Caco-2 (cell line): ENCODE measurements at regions of chr5 and their contacts with region 1.

Region 1: DNA sequence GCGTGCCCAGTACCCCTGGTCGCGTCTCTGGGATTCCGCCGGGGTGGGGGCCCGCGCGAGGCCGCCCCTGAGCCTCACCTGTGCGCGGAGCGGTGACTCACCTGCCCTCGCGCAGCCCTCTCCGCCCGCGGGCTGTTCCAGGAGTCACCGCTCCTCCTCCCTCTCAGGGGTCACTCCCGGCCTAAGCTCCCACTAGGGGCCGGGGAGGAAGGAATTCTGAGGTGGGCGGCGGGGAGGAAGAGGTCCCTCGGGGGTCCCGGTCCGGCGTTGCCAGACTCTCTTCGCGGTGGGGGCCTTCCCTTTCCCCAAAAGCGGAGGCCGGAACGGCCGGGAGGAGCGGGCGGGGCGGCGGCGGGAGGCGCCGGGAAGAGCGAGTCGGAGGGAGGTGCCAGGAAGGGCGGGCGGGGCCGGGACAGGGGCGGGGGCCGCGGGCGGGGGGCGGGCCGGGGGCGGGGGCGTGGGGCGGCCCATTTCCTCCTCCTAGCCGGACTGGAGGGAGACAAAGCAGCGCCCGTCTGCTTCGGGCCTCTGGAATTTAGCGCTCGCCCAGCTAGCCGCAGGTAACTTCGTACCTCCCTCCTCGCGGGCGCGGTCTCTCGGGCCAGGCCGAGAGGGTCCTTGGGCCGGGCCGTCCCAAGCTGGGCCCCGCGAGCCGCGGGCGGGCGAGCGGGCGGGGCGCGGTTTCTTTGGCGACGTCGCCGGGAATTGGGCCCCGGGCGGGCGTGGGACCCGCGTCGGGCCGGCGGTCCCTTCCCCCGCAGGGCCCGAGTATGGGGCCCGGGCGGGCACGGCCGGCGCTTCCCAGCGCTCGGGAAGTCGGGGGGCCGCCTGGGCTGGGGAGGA is at the start of gene CTNNA1:
- DNase-seq: peak; percentile 91 to 94
- H3K4me3 ChIP-seq: peak within 1 kb of the TSS; percentile 86
- H3K4me3 Mint-ChIP-seq: peak within 1 kb of the TSS; percentile 93
- H3K27ac Mint-ChIP-seq: peak within 1 kb of the TSS; percentile 97
- H3K4me1 ChIP-seq: peaks cover 18% of the 10 kb centered on the region
- H3K4me1 Mint-ChIP-seq: peaks cover 52% of the 10 kb centered on the region
- H3K27me3 ChIP-seq: no peaks in the 10 kb centered on the region
- H3K27me3 Mint-ChIP-seq: no peaks in the 10 kb centered on the region
- CTCF ChIP-seq: no peak
- total RNA-seq, gene CTNNA1: 392 and 403 TPM in 2 replicates

Region 2: GRCh38 chr5:138654281-138654867 is 98.8 kb before region 1 on chr5:
- CTCF ChIA-PET with region 1: no interaction called
- POLR2A ChIA-PET with region 1: interaction called, 3 read pairs
- intact Hi-C with region 1: loop called (anchors 5 kb)
- DNase-seq: no peak
- H3K4me3 ChIP-seq: no peak overlapping the region
- H3K4me3 Mint-ChIP-seq: no peak overlapping the region
- H3K27ac Mint-ChIP-seq: no peak overlapping the region
- H3K4me1 ChIP-seq: peaks cover 15% of the 10 kb centered on the region
- H3K4me1 Mint-ChIP-seq: peaks cover 16% of the 10 kb centered on the region
- H3K27me3 ChIP-seq: no peaks in the 10 kb centered on the region
- H3K27me3 Mint-ChIP-seq: no peaks in the 10 kb centered on the region
- CTCF ChIP-seq: no peak

Region 3: DNA sequence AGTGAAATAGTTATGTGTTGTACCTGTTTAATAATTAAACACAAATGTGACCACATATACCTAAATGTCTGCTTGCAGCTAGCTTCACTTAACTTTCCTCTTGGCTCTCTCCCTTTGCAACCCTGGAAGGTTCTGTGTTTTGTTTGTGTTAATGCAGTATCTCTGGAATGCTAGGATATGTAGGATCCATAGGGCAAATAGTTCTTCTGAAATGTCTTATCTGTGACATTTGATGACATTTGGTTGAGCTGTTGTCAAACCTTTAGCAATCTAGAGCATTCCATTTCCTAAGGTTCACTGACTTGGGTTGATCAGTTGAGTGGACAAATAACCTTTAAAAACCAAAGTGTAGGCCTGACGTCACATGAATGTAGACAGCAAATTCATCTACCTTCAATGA is 21.9 kb after region 1 on chr5:
- CTCF ChIA-PET with region 1: no interaction called
- POLR2A ChIA-PET with region 1: interaction called, 4 read pairs
- intact Hi-C with region 1: loop called (anchors 1 kb)
- DNase-seq: peak; percentile 70 to 75
- H3K4me3 ChIP-seq: no peak overlapping the region
- H3K4me3 Mint-ChIP-seq: peak overlapping the region; percentile 54
- H3K27ac Mint-ChIP-seq: peak overlapping the region; percentile 81
- H3K4me1 ChIP-seq: peaks cover 43% of the 10 kb centered on the region
- H3K4me1 Mint-ChIP-seq: peaks cover 25% of the 10 kb centered on the region
- H3K27me3 ChIP-seq: no peaks in the 10 kb centered on the region
- H3K27me3 Mint-ChIP-seq: no peaks in the 10 kb centered on the region
- CTCF ChIP-seq: no peak